ENCODE measurements at regions of chr11 and their contacts with region 1.

Region 1: GRCh38 chr11:118791111-118791965 is at the start of gene DDX6:
- DNase-seq: peak; percentile 94
- H3K4me3 Mint-ChIP-seq: peak within 1 kb of the TSS; percentile 94
- H3K27ac Mint-ChIP-seq: peak within 1 kb of the TSS; percentile 99
- H3K4me1 Mint-ChIP-seq: peaks cover 22% of the 10 kb centered on the region
- H3K27me3 Mint-ChIP-seq: no peaks in the 10 kb centered on the region
- total RNA-seq, gene DDX6: 175 to 180 TPM

Region 2: DNA sequence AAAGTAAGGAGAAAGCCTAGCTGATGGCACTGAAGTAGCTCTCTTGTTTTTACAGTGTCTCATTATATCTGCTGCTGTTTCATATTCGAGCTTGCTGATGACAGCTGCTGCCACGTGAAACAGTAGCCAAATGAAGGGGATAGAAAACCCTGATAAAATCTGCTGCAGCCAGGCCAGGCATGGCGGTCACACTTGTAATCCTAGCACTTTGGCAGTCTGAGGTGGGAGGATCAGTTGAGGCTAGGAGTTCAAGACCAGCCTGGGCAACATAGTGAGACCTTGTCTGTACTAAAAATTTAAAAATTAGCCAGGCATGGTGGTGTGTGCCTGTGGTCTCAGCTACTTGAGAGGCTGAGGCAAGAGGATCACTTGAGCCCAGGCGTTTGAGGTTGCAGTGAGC is 239.0 kb before region 1 on chr11:
- CTCF ChIA-PET with region 1: no interaction called
- POLR2A ChIA-PET with region 1: no interaction called
- intact Hi-C with region 1: no loop called
- DNase-seq: no peak
- H3K4me3 Mint-ChIP-seq: no peak overlapping the region
- H3K27ac Mint-ChIP-seq: no peak overlapping the region
- H3K4me1 Mint-ChIP-seq: no peaks in the 10 kb centered on the region
- H3K27me3 Mint-ChIP-seq: no peaks in the 10 kb centered on the region

Region 3: DNA sequence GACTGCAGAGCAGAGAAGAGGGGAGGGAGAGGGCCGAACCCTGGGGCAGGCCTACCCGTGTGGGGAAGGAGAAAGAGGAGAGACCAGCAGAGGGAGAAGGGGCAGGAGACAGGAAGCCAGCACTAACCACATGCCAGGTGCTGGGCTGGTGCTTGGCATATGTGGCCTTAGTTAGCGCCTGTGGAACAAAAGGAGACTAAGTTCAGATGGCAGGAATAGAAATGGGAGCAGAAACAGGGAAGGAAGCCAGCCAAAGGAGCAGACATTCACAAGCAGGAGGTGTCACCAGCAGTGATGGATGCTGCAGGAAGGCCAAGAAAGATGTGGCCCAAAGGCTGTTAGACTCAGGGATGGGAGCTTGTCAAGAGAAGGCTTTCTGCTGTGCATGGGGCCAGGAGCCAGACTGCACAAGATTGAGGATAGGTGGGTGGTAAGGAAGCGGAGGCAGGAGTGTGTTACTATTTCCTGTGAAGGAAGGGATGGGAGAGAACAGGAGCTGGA is 138.6 kb before region 1 on chr11:
- CTCF ChIA-PET with region 1: no interaction called
- POLR2A ChIA-PET with region 1: no interaction called
- intact Hi-C with region 1: no loop called
- DNase-seq: no peak
- H3K4me3 Mint-ChIP-seq: no peak overlapping the region
- H3K27ac Mint-ChIP-seq: no peak overlapping the region
- H3K4me1 Mint-ChIP-seq: peaks cover 8% of the 10 kb centered on the region
- H3K27me3 Mint-ChIP-seq: no peaks in the 10 kb centered on the region

Region 4: DNA sequence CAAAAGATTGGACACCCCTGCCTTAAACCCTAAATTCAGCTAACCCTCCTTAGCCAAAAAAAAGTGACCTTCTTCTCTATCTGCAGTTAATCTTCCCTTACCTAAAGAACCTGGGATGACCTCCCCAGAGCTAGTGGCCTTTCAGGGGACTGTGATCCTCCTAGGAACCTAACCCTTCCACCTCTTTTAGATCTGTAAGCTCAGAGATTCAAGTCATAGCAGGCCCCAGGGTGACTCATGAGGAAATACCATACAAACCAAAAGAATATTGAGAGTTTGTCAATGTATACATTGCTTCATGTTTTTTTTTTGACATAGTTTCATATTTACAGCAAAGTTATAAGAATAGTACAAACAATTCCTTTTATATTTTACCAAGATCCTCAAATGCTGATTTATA is 54.0 kb after region 1 on chr11:
- CTCF ChIA-PET with region 1: interaction called, 6 read pairs
- POLR2A ChIA-PET with region 1: interaction called, 16 read pairs
- intact Hi-C with region 1: loop called (anchors 1 kb)
- DNase-seq: peak; percentile 55
- H3K4me3 Mint-ChIP-seq: no peak overlapping the region
- H3K27ac Mint-ChIP-seq: peak overlapping the region; percentile 24
- H3K4me1 Mint-ChIP-seq: peaks cover 45% of the 10 kb centered on the region
- H3K27me3 Mint-ChIP-seq: no peaks in the 10 kb centered on the region

Region 5: DNA sequence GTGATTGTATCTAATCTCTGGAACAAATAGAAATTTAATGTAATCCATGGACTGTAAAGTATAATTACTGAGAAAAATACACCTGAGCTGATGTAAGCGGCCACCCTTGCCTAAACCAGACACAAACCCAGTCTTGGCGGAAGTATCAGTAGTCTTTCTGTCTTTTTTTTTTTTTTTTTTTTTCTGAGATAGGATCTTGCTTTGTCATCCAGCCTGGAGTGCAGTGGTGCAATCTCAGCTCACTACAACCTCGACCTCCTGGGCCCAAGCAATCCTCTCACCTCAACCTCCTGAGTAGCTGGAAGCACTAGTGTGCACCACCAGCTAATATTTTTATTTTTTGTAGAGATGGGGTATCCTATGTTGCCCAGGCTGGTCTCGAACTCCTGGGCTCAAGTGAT is 86.8 kb after region 1 on chr11:
- CTCF ChIA-PET with region 1: interaction called, 12 read pairs
- POLR2A ChIA-PET with region 1: interaction called, 48 read pairs
- intact Hi-C with region 1: loop called (anchors 1 kb)
- DNase-seq: peak; percentile 60
- H3K4me3 Mint-ChIP-seq: peak overlapping the region; percentile 41
- H3K27ac Mint-ChIP-seq: peak overlapping the region; percentile 98
- H3K4me1 Mint-ChIP-seq: peaks cover 93% of the 10 kb centered on the region
- H3K27me3 Mint-ChIP-seq: no peaks in the 10 kb centered on the region

Region 6: GRCh38 chr11:118895142-118896039 is 104.1 kb after region 1 on chr11:
- CTCF ChIA-PET with region 1: interaction called, 15 read pairs
- POLR2A ChIA-PET with region 1: interaction called, 21 read pairs
- intact Hi-C with region 1: no loop called
- DNase-seq: peak; percentile 89
- H3K4me3 Mint-ChIP-seq: peak overlapping the region; percentile 58
- H3K27ac Mint-ChIP-seq: peak overlapping the region; percentile 93
- H3K4me1 Mint-ChIP-seq: peaks cover 71% of the 10 kb centered on the region
- H3K27me3 Mint-ChIP-seq: no peaks in the 10 kb centered on the region

Region 7: DNA sequence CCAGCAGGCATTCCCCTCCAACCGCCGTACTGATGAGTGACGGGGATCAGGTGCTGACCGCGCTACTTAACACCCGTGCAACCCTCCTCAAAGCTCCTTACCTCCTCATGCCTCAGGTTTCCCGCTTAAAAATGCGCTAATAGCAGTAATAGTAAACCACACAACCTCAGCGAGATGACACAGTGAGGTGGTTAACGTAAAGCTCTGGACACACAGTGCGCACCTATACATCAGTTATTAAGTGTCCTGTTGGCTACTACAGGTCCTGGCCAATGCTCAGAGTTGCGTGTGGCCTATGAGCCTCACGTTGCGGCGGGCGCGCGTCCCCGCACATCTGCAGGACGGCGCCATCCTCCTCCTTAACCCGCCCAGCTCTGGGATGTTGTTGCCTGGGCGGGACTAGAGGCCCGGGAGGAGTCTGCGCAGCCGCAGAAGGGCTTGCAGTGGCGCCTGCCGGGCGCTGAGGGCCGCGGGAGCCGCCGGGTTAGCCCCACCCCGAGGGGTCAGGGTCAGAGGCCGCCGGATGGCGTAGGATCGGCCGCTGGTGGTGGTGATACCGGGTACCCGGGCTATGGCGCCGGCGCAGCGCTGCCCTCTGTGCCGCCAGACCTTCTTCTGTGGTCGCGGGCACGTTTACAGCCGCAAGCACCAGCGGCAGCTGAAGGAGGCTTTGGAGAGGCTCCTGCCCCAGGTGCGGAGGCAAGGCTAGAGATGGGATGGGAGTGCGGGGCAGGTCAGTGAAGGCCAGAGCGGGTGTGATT is 206.5 kb after region 1 on chr11 and contains the start of gene CENATAC:
- CTCF ChIA-PET with region 1: no interaction called
- POLR2A ChIA-PET with region 1: interaction called, 9 read pairs
- intact Hi-C with region 1: loop called (anchors 5 kb)
- DNase-seq: peak; percentile 98
- H3K4me3 Mint-ChIP-seq: peak within 1 kb of the TSS; percentile 88
- H3K27ac Mint-ChIP-seq: peak within 1 kb of the TSS; percentile 94
- H3K4me1 Mint-ChIP-seq: peaks cover 28% of the 10 kb centered on the region
- H3K27me3 Mint-ChIP-seq: no peaks in the 10 kb centered on the region
- total RNA-seq, gene CENATAC: 21.4 to 22.3 TPM

Measured in activated CD4-positive, alpha-beta memory T cell treated with anti-CD3 and anti-CD28 coated beads for 36 hours (primary cell).